BJ (cell line): ENCODE measurements at regions of chr2 and their contacts with region 1.

Region 1: DNA sequence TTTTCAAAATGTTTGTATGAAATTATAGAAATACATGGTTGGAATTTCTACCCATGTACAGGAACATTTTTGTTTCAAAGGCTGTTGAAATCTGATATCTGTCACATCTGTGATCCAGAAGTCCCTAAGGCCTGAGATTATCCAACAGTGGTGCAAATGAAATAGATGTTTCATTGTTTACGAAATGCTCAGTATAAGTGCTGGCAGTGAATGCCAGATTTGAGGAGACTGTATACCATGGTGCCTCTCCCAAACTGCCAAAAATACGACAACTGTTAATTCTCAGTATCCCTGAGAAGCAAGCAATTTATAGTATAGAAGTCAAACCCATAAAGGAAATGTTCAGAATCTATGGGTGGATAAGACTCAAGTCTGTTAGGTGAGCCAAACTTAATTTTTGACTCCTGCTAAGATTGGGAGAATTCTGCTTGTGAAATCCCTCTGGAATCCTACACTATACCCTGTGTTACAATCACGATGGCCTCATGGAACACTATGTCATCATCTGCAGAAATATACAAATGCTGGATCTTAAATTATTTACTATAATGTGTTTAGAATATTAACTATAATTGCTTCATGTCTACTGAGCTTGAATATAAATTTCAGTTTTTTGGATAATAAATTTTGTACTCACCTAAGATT is 71.2 kb upstream of the DOCK10 start:
- DNase-seq: no peak
- H3K4me3 ChIP-seq: no peak overlapping the region
- H3K27me3 ChIP-seq: no peaks in the 10 kb centered on the region
- CTCF ChIP-seq: no peak

Region 2: GRCh38 chr2:224816816-224817215 is 296.7 kb before region 1 on chr2:
- CTCF ChIA-PET with region 1: no interaction called
- POLR2A ChIA-PET with region 1: interaction called, 14 read pairs
- DNase-seq: peak; percentile 80
- H3K4me3 ChIP-seq: no peak overlapping the region
- H3K27me3 ChIP-seq: no peaks in the 10 kb centered on the region
- CTCF ChIP-seq: no peak

Region 3: DNA sequence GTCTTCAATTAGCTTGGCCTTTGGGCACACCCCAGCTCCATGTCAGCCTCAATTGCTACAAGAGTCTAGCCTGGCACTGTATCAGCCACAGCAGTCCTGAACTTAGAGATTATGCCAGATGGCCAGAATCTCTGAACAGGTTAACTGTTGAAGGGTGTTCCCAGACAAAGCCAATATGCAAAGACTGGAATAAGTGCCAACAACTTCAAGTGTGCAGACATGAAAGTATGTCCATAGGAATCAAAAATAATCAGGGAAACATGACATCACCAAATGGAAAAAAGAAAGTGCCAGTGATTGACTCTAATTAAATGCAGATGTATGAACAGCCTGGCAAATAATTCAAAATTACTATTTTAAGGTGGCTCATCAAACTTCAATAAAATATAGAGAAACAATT is 27.2 kb after region 1 on chr2:
- CTCF ChIA-PET with region 1: no interaction called
- POLR2A ChIA-PET with region 1: no interaction called
- DNase-seq: no peak
- H3K4me3 ChIP-seq: no peak overlapping the region
- H3K27me3 ChIP-seq: no peaks in the 10 kb centered on the region
- CTCF ChIP-seq: no peak